ENCODE measurements at regions of chr1 and their contacts with region 1.

Region 1: GRCh38 chr1:107430540-107431228 is 289.8 kb downstream of the NTNG1 start:
- DNase-seq: peak; percentile 70
- H3K4me3 Mint-ChIP-seq: no peak overlapping the region
- H3K27ac Mint-ChIP-seq: no peak overlapping the region
- H3K4me1 Mint-ChIP-seq: peaks cover 6% of the 10 kb centered on the region
- H3K27me3 Mint-ChIP-seq: no peaks in the 10 kb centered on the region
- CTCF ChIP-seq: peak; percentile 73

Region 2: DNA sequence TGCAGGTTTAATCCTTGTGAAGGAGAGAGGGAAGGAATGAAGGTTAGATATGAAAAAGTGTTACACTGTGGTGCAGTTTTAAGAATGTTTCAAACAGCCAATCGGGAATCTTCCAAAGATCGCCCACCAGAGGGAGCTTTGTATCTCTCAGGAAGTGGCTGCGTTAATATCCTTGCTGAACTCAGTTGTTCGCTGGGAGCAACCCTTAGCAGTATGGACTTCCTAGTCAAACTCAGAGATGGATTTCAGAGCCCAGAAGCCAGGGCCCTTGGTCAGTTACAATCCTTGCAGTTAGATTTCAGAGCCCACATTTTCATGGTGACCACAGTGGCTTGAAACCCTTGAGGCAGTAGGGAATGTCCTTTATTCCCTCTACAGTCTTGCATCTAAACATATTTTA is 153.7 kb before region 1 on chr1:
- CTCF ChIA-PET with region 1: interaction called, 7 read pairs
- POLR2A ChIA-PET with region 1: interaction called, 3 read pairs
- intact Hi-C with region 1: loop called (anchors 2 kb)
- DNase-seq: peak; percentile 63
- H3K4me3 Mint-ChIP-seq: no peak overlapping the region
- H3K27ac Mint-ChIP-seq: no peak overlapping the region
- H3K4me1 Mint-ChIP-seq: peaks cover 5% of the 10 kb centered on the region
- H3K27me3 Mint-ChIP-seq: no peaks in the 10 kb centered on the region
- CTCF ChIP-seq: peak; percentile 79

Region 3: DNA sequence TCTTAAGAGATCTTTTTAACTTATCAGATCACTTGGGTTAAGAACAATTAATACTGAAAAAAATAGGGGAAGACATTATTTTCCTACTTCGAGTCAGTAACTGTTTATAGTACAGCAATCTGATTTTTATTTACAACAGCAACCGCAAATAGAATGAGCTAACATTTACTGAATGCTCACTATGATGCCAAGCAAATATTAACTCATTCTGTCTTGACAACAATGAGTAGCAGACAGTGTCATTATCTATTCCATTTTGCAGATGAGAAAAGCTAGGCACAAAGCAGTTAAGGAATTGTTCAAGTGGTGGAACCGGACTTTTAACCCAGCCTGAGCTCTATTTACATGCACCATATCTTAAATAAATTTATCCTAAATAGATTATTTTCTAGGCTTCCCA is 16.1 kb before region 1 on chr1:
- CTCF ChIA-PET with region 1: interaction called, 11 read pairs
- POLR2A ChIA-PET with region 1: no interaction called
- intact Hi-C with region 1: no loop called
- DNase-seq: no peak
- H3K4me3 Mint-ChIP-seq: no peak overlapping the region
- H3K27ac Mint-ChIP-seq: no peak overlapping the region
- H3K4me1 Mint-ChIP-seq: no peaks in the 10 kb centered on the region
- H3K27me3 Mint-ChIP-seq: no peaks in the 10 kb centered on the region
- CTCF ChIP-seq: no peak

Region 4: GRCh38 chr1:107420559-107420958 is 10.1 kb before region 1 on chr1:
- CTCF ChIA-PET with region 1: interaction called, 11 read pairs
- POLR2A ChIA-PET with region 1: no interaction called
- intact Hi-C with region 1: no loop called
- DNase-seq: no peak
- H3K4me3 Mint-ChIP-seq: no peak overlapping the region
- H3K27ac Mint-ChIP-seq: no peak overlapping the region
- H3K4me1 Mint-ChIP-seq: no peaks in the 10 kb centered on the region
- H3K27me3 Mint-ChIP-seq: no peaks in the 10 kb centered on the region
- CTCF ChIP-seq: no peak

Region 5: GRCh38 chr1:107450899-107451664 is 20.4 kb after region 1 on chr1:
- CTCF ChIA-PET with region 1: interaction called, 11 read pairs
- POLR2A ChIA-PET with region 1: no interaction called
- intact Hi-C with region 1: no loop called
- DNase-seq: no peak
- H3K4me3 Mint-ChIP-seq: no peak overlapping the region
- H3K27ac Mint-ChIP-seq: no peak overlapping the region
- H3K4me1 Mint-ChIP-seq: no peaks in the 10 kb centered on the region
- H3K27me3 Mint-ChIP-seq: no peaks in the 10 kb centered on the region
- CTCF ChIP-seq: no peak

Region 6: DNA sequence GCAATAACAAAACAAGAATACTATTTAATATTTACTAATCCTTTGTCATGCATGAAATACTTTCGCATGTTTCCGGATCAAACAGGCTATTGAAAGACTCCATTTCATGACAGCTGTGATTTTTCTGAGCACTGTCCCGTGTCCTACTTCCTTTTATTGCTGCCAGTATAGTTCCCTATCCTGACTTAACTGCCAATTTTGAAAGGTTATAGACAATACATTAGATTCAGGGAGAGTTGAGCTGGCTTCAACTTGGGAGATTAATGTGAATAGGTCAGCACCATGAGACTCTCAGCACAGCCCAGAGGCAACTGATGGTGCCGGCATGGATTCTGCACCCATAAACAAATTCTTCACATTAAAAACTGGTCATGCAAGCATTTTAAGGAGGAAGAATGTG is 308.5 kb after region 1 on chr1:
- CTCF ChIA-PET with region 1: no interaction called
- POLR2A ChIA-PET with region 1: no interaction called
- intact Hi-C with region 1: no loop called
- DNase-seq: no peak
- H3K4me3 Mint-ChIP-seq: no peak overlapping the region
- H3K27ac Mint-ChIP-seq: no peak overlapping the region
- H3K4me1 Mint-ChIP-seq: no peaks in the 10 kb centered on the region
- H3K27me3 Mint-ChIP-seq: no peaks in the 10 kb centered on the region
- CTCF ChIP-seq: no peak